AG04450 (cell line): ENCODE measurements at regions of chr15 and their contacts with region 1.

Region 1: DNA sequence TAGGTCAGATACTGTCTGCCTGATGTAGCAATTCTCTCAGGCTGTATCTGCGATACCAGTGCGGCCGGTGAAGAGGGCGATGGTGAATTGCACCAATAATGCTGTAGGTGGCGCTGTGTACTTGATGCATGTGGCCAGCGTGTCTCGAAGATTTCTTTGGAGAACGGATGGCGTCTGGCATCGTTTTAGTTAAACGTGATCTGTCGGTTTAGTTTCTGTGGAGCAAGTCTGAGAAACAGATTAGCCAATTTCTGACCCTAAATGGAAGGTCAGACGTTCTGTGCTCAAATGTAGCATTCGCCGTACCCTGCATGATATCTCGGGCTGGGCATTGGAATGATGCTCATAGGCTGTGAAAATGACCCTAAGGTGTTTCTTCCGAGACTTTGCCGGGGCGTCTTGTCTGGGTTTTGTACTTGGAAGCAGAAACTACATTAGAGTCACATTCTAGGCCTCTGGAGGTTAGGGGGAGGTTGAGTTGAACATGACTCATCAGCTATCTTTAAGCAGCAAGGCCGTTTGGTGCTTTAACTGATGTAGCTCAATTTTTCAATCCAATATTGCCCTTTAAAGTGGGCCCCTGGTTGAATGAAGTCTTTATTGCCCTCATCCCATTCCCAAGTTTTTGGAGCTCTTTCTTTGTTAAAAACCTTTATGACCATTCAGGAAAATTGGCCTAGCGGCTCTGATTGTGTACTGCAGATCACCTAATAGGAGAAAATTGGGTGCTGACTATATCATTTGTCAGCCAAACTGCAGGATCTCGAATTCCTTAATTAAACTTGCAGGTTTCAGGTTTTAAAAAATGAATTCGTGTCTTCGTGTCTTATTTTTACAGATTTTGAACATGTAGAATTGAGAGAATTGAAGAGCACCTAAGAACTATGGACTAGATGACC is 80.0 kb downstream of the SQOR start:
- DNase-seq: peak; percentile 20
- H3K4me3 ChIP-seq: peak overlapping the region; percentile 44
- H3K27ac ChIP-seq: no peak overlapping the region
- H3K27me3 ChIP-seq: peaks cover 2% of the 10 kb centered on the region
- CTCF ChIP-seq: peak; percentile 90

Region 2: DNA sequence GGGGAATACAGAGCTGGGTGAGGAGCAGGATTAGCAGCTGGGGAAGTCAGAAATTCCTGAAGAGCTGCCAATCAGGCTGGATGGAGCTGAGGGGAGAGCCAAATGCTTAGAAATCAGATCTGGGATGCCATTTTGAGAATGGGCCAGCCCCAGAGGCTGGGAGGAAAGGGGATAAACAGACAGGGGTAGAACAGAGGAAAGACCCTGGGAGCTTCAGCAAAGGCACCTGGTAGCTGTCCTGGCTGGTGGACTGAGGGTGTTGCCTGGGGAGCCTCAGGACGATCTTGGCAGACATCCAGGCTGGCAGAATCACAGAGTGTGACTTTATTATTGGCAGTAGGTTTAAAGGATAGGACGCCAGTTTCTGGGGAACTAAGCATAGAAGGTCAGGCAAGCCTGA is 17.8 kb after region 1 on chr15:
- CTCF ChIA-PET with region 1: interaction called, 14 read pairs
- POLR2A ChIA-PET with region 1: no interaction called
- DNase-seq: no peak
- H3K4me3 ChIP-seq: no peak overlapping the region
- H3K27ac ChIP-seq: no peak overlapping the region
- H3K27me3 ChIP-seq: no peaks in the 10 kb centered on the region
- CTCF ChIP-seq: no peak

Region 3: GRCh38 chr15:45790325-45790943 is 75.6 kb after region 1 on chr15:
- CTCF ChIA-PET with region 1: interaction called, 37 read pairs
- POLR2A ChIA-PET with region 1: no interaction called
- DNase-seq: no peak
- H3K4me3 ChIP-seq: no peak overlapping the region
- H3K27ac ChIP-seq: no peak overlapping the region
- H3K27me3 ChIP-seq: no peaks in the 10 kb centered on the region
- CTCF ChIP-seq: peak; percentile 59

Region 4: GRCh38 chr15:45795440-45796069 is 80.7 kb after region 1 on chr15:
- CTCF ChIA-PET with region 1: interaction called, 37 read pairs
- POLR2A ChIA-PET with region 1: no interaction called
- DNase-seq: no peak
- H3K4me3 ChIP-seq: no peak overlapping the region
- H3K27ac ChIP-seq: no peak overlapping the region
- H3K27me3 ChIP-seq: no peaks in the 10 kb centered on the region
- CTCF ChIP-seq: peak; percentile 49

Region 5: DNA sequence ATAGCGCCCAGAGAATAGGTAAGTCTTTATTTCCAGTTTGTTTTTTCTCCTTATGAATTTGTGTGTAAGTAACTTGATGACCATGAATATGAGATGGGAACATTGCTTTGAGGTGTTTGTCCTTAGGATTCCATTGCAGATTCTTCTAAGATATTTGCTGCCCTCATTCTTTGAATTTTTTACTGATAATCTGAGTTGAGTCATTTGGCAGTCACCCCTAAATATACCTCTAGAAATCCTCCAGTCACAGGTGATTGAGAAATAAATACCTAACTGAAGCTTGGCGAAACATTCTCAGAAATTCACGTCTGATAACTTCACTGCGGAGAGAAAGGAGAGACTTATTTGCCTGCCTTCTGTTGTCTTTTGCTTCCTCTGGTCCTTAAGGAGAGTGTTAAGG is 265.5 kb after region 1 on chr15:
- CTCF ChIA-PET with region 1: no interaction called
- POLR2A ChIA-PET with region 1: no interaction called
- DNase-seq: no peak
- H3K4me3 ChIP-seq: no peak overlapping the region
- H3K27ac ChIP-seq: no peak overlapping the region
- H3K27me3 ChIP-seq: no peaks in the 10 kb centered on the region
- CTCF ChIP-seq: no peak